Activated T-helper 1 cell treated with anti-CD3 and anti-CD28 coated beads, Interleukin-12 subunit alpha, Interleukin-12 subunit beta, Interleukin-2, Interleukin-4 antibody, amounts not matched to agents 30 ng/mL and 10 ng/mL and 1 ng/mL, durations not matched to agents 14 hours and 24 hours and 36 hours (primary cell): ENCODE measurements at regions of chr1 and their contacts with region 1.

Region 1: GRCh38 chr1:23790696-23791515 is at the start of gene LYPLA2:
- DNase-seq: peak; percentile 85
- H3K4me3 Mint-ChIP-seq: peak within 1 kb of the TSS; percentile 100
- H3K27ac Mint-ChIP-seq: peak within 1 kb of the TSS; percentile 94
- H3K4me1 Mint-ChIP-seq: peaks cover 16% of the 10 kb centered on the region
- H3K27me3 Mint-ChIP-seq: no peaks in the 10 kb centered on the region
- total RNA-seq, gene LYPLA2: 91.4 and 96.1 TPM in 2 replicates

Region 2: GRCh38 chr1:23772049-23772853 is 18.7 kb before region 1 on chr1:
- intact Hi-C with region 1: loop called (anchors 2 kb)
- DNase-seq: peak; percentile 80
- H3K4me3 Mint-ChIP-seq: no peak overlapping the region
- H3K27ac Mint-ChIP-seq: no peak overlapping the region
- H3K4me1 Mint-ChIP-seq: peaks cover 27% of the 10 kb centered on the region
- H3K27me3 Mint-ChIP-seq: no peaks in the 10 kb centered on the region